PC-3 (cell line): ENCODE measurements at regions of chr19 and their contacts with region 1.

Region 1: DNA sequence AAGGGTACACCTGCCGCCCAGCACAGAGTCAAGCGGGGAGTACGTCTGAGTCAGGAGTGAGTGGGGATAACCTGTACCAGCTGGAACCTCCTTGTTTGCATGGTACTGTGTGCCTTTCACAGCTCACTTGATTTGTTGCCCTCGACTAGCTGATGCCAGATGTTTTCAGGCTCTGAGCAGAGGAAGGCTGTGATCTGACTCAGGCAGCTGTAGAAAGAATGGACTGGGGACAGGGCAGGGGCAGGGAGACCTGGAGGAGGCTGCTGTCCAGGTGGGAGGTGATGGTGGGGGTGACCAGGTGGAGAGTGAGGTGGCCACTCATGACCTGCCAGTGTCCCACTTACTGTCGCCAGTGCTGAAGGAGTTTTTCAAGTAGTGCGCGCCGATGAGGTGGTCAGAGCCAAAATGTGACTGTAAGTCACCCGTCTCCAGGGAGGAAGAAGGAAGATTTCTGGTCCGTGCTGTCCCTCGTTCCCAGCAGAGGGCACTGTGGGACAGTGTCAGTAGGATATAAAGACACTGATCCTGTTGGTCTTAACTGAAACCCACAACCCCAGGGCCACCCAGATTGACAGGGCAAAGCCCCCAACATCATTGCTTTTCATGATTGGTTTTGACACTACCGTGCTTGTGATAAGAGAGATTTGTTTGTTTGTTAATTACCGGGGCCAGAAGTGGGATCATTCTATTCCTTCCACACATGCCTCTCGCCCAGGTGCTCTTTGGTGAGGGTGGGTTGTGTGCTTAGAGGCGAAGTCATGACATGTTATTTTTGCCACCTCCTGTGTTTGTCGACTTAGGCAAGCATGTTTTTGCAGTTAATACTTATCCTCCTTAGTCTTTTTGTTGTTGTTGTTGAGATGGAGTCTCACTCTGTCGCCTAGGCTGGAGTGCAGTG is 128.4 kb downstream of the DPF1 start:
- DNase-seq: peak; percentile 68
- ATAC-seq: peak; percentile 53; the same call in 1 of the 2 replicates
- H3K4me3 ChIP-seq: no peak overlapping the region
- H3K27ac ChIP-seq: no peak overlapping the region
- H3K4me1 ChIP-seq: no peaks in the 10 kb centered on the region
- H3K27me3 ChIP-seq: no peaks in the 10 kb centered on the region
- CTCF ChIP-seq: peak; percentile 67

Region 2: DNA sequence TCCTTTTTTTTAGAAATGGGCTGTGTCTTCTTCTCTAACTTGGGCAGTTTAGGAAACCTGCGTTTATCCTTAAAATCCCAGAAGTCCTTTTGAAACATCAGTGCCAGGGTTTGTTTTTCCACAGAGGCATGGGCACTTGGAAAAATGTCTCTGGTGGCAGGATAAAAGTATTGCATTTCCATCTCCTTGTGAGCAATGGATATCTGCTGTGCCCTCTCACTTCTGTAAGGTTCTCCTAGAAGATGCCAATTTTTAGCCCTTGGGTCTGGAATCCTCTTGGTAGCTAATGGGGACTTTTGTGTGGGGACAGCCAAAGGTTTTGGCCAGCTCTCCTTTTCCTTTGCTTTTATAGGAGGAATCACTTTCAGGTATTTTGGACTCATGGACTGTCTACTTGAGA is 210.3 kb before region 1 on chr19:
- CTCF ChIA-PET with region 1: no interaction called
- POLR2A ChIA-PET with region 1: no interaction called
- intact Hi-C with region 1: no loop called
- DNase-seq: no peak
- ATAC-seq: no peak
- H3K4me3 ChIP-seq: no peak overlapping the region
- H3K27ac ChIP-seq: no peak overlapping the region
- H3K4me1 ChIP-seq: no peaks in the 10 kb centered on the region
- H3K27me3 ChIP-seq: peaks cover 11% of the 10 kb centered on the region; the same call in 1 of the 2 replicates
- CTCF ChIP-seq: no peak

Region 3: DNA sequence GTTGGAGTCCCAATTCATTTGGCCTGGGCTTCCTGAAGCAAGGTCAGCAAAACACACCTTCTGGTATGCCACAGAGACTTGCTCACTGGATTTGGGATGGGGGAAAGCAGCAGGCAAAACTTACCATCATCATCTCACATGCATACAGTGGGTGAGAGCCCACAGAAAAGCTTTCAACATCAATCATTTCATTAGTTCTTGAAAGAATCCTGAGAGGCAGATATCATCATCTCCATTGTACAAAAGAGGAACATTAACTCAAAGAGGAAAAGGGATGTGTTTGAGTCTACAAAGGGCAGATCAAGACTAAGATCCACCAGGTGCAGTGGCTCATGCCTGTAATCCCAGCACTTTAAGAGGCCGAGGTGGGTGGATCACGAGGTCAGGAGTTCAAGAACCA is 195.7 kb before region 1 on chr19:
- CTCF ChIA-PET with region 1: no interaction called
- POLR2A ChIA-PET with region 1: no interaction called
- intact Hi-C with region 1: loop called (anchors 2 kb)
- DNase-seq: no peak
- ATAC-seq: no peak
- H3K4me3 ChIP-seq: no peak overlapping the region
- H3K27ac ChIP-seq: no peak overlapping the region
- H3K4me1 ChIP-seq: no peaks in the 10 kb centered on the region
- H3K27me3 ChIP-seq: no peaks in the 10 kb centered on the region
- CTCF ChIP-seq: no peak

Region 4: DNA sequence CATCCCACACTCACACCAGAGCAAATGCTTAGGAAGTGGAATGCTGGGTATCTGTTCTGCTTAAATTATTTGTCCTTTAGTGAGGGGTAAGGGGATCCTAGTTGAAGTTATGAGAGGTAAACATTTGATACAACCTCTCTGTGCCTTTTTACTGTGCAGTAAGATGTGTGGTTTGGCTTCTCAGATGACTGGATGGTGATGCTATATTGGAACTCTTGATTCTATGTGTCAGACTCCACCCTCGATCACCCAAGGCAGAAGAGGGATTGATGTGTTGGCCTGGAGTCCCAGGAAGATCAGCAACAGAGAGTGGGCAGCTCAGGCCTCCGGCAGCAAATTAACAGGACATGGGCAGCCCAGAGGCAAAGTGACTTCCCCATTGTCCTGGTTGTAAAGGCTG is 122.0 kb before region 1 on chr19:
- CTCF ChIA-PET with region 1: no interaction called
- POLR2A ChIA-PET with region 1: interaction called, 13 read pairs
- intact Hi-C with region 1: no loop called
- DNase-seq: no peak
- ATAC-seq: no peak
- H3K4me3 ChIP-seq: no peak overlapping the region
- H3K27ac ChIP-seq: no peak overlapping the region
- H3K4me1 ChIP-seq: no peaks in the 10 kb centered on the region
- H3K27me3 ChIP-seq: no peaks in the 10 kb centered on the region
- CTCF ChIP-seq: no peak

Region 5: GRCh38 chr19:38122402-38123093 is 26.9 kb after region 1 on chr19:
- CTCF ChIA-PET with region 1: no interaction called
- POLR2A ChIA-PET with region 1: no interaction called
- intact Hi-C with region 1: no loop called
- DNase-seq: no peak
- ATAC-seq: no peak
- H3K4me3 ChIP-seq: no peak overlapping the region
- H3K27ac ChIP-seq: no peak overlapping the region
- H3K4me1 ChIP-seq: no peaks in the 10 kb centered on the region
- H3K27me3 ChIP-seq: no peaks in the 10 kb centered on the region
- CTCF ChIP-seq: no peak

Region 6: DNA sequence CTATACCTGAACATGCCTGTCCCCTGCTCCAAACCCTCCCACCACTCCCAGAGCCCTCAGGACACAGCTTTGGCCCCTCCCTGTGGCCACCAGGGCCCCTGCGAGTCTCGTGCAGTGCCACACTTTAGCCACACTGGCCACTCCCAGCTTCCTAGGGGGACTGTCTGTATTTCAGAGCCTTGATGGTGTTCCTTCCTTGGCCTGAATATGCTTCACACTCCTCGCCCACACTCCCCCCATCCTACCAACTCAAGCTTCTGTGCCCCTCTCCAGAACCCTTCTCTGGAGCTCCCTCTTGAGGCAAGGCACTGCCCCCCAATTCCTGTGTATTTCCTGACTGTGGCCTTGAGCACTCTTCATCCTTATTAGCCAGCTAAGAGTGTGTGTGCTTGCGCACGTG is 48.2 kb after region 1 on chr19:
- CTCF ChIA-PET with region 1: no interaction called
- POLR2A ChIA-PET with region 1: no interaction called
- intact Hi-C with region 1: no loop called
- DNase-seq: no peak
- ATAC-seq: no peak
- H3K4me3 ChIP-seq: no peak overlapping the region
- H3K27ac ChIP-seq: no peak overlapping the region
- H3K4me1 ChIP-seq: no peaks in the 10 kb centered on the region
- H3K27me3 ChIP-seq: no peaks in the 10 kb centered on the region
- CTCF ChIP-seq: peak; percentile 38; the same call in 1 of the 2 replicates

Region 7: DNA sequence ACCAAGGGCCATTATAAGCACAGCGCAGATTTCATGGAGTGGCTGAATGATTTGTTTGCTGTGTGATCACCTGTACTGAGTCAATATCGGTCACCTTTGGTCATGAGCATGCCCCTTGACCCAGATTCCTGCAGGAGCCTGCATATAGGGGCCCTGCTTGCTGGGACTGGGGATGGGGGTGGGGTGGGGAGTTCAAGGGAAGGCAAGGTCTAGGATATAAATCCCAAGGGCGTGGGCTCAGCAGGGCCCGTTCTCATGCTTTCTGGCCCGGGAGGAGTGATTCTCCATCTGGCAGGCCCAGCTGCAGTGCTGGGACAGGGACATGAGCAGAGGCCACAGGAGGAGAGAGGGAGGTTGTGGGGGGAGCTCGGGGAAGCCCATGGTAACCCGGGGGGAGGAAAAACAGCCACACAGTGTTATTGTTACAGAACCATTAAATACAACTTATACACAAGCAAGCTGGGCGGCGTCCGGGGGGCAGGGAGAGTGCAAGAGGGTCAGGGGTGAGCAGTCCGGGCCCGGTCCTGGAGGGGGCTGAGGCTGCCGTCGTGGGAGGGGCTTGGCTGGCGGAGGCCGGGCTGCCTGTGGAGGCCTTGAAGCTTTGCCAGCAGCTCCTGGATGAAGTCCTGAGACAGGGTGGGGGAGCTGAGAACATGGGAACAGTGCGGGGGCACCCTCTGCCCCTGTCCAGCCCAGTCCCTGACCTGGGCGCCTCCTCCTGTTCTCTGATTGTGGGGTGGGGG is 155.3 kb after region 1 on chr19:
- CTCF ChIA-PET with region 1: no interaction called
- POLR2A ChIA-PET with region 1: no interaction called
- intact Hi-C with region 1: no loop called
- DNase-seq: no peak
- ATAC-seq: no peak; the same call in 1 of the 2 replicates
- H3K4me3 ChIP-seq: no peak overlapping the region
- H3K27ac ChIP-seq: no peak overlapping the region
- H3K4me1 ChIP-seq: peaks cover 4% of the 10 kb centered on the region; the same call in 1 of the 2 replicates
- H3K27me3 ChIP-seq: no peaks in the 10 kb centered on the region
- CTCF ChIP-seq: no peak